Heart right ventricle (tissue), 16 donors: ENCODE measurements at regions of chrX and their contacts with region 1.

Region 1: DNA sequence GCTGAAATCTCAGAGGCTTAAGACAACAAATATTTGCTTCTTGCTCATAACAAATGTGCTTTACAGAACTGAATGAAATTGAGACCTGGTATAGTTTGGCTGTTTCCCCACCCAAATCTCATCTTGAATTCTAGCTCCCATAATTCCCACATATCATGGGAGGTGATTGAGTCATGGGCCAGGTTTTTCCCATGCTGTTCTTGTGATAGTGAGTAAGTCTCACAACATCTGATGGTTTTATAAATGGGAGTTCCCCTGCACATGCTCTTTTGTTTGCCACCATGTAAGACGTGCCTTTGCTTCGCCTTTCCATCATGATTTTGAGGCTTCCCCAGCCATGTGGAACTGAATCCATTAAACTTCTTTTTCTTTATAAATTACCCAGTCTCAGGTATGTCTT is 221.1 kb upstream of the DIPK2B start:
- DNase-seq: no peak
- ATAC-seq: no peak
- H3K4me3 ChIP-seq: no peak overlapping the region
- H3K27ac ChIP-seq: no peak overlapping the region
- H3K4me1 ChIP-seq: no peaks in the 10 kb centered on the region
- H3K27me3 ChIP-seq: peaks cover 0 to 28% (median 0%) of the 10 kb centered on the region in 7 donors
- CTCF ChIP-seq: no peak

Region 2: GRCh38 chrX:45258731-45259402 is 162.9 kb before region 1 on chrX:
- intact Hi-C with region 1: no loop called
- DNase-seq: no peak
- ATAC-seq: no peak
- H3K4me3 ChIP-seq: no peak overlapping the region
- H3K27ac ChIP-seq: no peak overlapping the region
- H3K4me1 ChIP-seq: no peaks in the 10 kb centered on the region
- H3K27me3 ChIP-seq: peaks cover 0 to 19% (median 0%) of the 10 kb centered on the region in 7 donors
- CTCF ChIP-seq: no peak

Region 3: GRCh38 chrX:45351478-45351877 is 70.3 kb before region 1 on chrX:
- intact Hi-C with region 1: no loop called
- DNase-seq: no peak
- ATAC-seq: no peak
- H3K4me3 ChIP-seq: no peak overlapping the region
- H3K27ac ChIP-seq: no peak overlapping the region
- H3K4me1 ChIP-seq: no peaks in the 10 kb centered on the region
- H3K27me3 ChIP-seq: peaks cover 0 to 8% (median 0%) of the 10 kb centered on the region in 7 donors
- CTCF ChIP-seq: no peak

Region 4: GRCh38 chrX:45472968-45473367 is 51.2 kb after region 1 on chrX:
- intact Hi-C with region 1: no loop called
- DNase-seq: no peak
- ATAC-seq: no peak
- H3K4me3 ChIP-seq: no peak overlapping the region
- H3K27ac ChIP-seq: no peak overlapping the region
- H3K4me1 ChIP-seq: no peaks in the 10 kb centered on the region
- H3K27me3 ChIP-seq: peaks cover 0 to 6% (median 0%) of the 10 kb centered on the region in 7 donors
- CTCF ChIP-seq: no peak

Region 5: DNA sequence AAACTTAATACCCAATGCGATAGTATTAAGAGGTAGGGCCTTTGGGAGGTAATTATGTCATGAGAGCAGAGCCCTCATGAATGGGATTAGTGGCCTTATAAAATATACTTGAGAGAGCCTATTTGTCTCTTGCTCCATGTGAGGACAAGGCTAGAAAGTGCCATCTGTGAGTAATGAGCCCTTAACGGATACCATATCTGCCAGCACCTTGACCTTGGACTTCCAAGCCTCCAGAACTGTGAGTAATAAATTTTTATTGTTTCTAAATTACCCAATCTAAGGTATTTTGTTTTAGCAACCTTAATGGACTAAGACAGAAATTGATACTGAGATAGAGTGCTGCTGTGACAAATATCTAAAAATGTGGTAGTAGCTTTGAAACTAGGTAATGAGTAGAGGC is 63.9 kb after region 1 on chrX:
- intact Hi-C with region 1: loop called in 1 of 10 experiments (anchors 2 kb)
- DNase-seq: no peak
- ATAC-seq: no peak
- H3K4me3 ChIP-seq: no peak overlapping the region
- H3K27ac ChIP-seq: no peak overlapping the region
- H3K4me1 ChIP-seq: no peaks in the 10 kb centered on the region
- H3K27me3 ChIP-seq: peaks cover 0 to 4% (median 0%) of the 10 kb centered on the region in 7 donors
- CTCF ChIP-seq: no peak